ENCODE measurements at regions of chr9 and their contacts with region 1.

Region 1: DNA sequence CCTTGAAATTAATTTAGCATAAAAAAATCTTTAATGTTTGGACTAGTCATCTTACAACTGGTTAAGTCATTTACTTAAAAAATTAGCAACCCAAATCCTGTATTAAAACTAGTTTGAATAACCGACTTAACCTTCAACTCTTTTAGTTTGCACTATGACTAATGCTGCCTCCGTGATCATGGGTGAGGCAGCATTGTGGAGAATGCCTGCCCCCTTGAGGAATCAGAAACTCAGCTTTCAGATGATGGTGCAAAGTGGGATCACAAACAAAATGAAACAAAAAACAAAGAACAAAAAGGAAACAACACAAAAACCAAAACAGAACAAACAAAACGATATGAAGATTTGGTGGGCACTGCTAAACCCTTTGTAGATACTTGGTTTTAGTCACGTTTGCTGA is 127.0 kb upstream of the PALM2AKAP2 start:
- DNase-seq: peak; percentile 76
- ATAC-seq: peak; percentile 82
- H3K4me3 ChIP-seq: 0 out of 2 replicates have a peak overlapping the region, but pooled peaks have one; percentile 2
- H3K27ac ChIP-seq: peak overlapping the region; percentile 63
- H3K4me1 ChIP-seq: peaks cover 20% of the 10 kb centered on the region
- H3K27me3 ChIP-seq: no peaks in the 10 kb centered on the region
- CTCF ChIP-seq: peak; percentile 82

Region 2: GRCh38 chr9:109561137-109561536 is 91.8 kb before region 1 on chr9:
- CTCF ChIA-PET with region 1: no interaction called
- POLR2A ChIA-PET with region 1: no interaction called
- intact Hi-C with region 1: no loop called
- DNase-seq: no peak
- ATAC-seq: no peak
- H3K4me3 ChIP-seq: no peak overlapping the region
- H3K27ac ChIP-seq: no peak overlapping the region
- H3K4me1 ChIP-seq: no peaks in the 10 kb centered on the region
- H3K27me3 ChIP-seq: peaks cover 14% of the 10 kb centered on the region
- CTCF ChIP-seq: no peak

Region 3: DNA sequence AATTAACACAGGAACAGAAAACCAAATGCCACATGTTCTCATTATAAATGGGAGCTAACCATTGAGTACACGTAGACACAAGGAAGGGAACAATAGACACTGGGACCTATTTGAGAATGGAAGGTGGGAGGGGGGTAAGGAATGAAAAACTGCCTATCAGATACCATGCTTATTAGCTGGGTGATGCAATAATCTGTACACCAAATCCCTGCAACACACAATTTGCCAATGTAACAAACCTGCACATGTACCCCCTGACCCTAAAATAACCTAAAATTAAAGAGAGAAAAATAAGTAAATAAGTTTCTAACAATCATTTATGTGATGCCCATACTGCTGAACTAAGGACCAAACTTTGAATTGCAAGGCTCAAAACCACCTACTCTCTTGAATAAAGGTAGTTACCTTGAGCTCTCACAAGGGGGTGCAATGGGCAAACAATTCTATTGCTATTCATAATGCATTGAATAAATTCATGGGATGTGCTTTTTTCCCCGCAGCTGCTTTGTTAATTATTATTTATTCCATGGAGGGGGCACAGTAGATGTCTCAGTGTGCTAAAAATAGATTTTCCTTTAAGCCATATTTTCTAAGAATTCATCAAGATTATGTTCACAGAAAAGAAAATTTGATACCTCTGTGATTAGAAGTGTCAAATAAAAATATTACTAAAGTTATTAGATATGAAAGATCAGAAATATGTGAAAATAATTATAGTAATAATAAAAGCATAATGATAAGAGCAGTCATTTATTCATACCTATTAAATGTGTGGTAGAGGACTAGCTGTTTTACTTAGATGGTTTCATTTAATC is 78.7 kb before region 1 on chr9:
- CTCF ChIA-PET with region 1: interaction called, 3 read pairs
- POLR2A ChIA-PET with region 1: no interaction called
- intact Hi-C with region 1: loop called (anchors 1 kb)
- DNase-seq: peak; percentile 72
- ATAC-seq: peak; percentile 65
- H3K4me3 ChIP-seq: no peak overlapping the region
- H3K27ac ChIP-seq: no peak overlapping the region
- H3K4me1 ChIP-seq: no peaks in the 10 kb centered on the region
- H3K27me3 ChIP-seq: no peaks in the 10 kb centered on the region
- CTCF ChIP-seq: peak; percentile 70

Region 4: DNA sequence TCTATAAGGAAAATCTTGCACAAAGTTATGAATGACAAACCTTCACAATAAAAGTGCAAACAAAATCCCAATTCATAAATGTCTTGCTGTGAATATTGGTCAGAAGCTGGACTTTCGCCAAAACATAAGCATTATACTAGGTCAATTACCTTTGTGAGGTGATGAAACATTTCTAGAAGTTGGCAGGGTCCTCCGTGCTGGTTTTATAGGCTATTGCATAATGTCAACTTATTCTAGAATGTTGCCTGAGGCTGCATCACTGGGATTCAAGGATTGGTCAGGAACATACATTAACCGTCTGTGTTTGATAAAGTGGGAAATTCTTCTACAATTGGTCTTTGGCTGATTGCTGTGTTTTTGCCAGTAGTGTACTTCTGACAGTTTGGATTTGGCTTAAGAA is 77.3 kb after region 1 on chr9:
- CTCF ChIA-PET with region 1: no interaction called
- POLR2A ChIA-PET with region 1: no interaction called
- intact Hi-C with region 1: loop called (anchors 2 kb)
- DNase-seq: peak; percentile 94
- ATAC-seq: peak; percentile 49
- H3K4me3 ChIP-seq: no peak overlapping the region
- H3K27ac ChIP-seq: no peak overlapping the region
- H3K4me1 ChIP-seq: peaks cover 18% of the 10 kb centered on the region
- H3K27me3 ChIP-seq: no peaks in the 10 kb centered on the region
- CTCF ChIP-seq: no peak

Measured in PC-3 (cell line).